Naive thymus-derived CD4-positive, alpha-beta T cell (primary cell): ENCODE measurements at regions of chr21 and their contacts with region 1.

Region 1: GRCh38 chr21:15552914-15553494 is 176.8 kb upstream of the USP25 start:
- DNase-seq: peak in 6 of 9 donors; percentile 13 to 62 (median 48)
- ATAC-seq: peak; percentile 64
- H3K4me3 ChIP-seq: no peak overlapping the region
- H3K4me3 Mint-ChIP-seq: peak overlapping the region in 5 of 10 donors; percentile 25 to 56 (median 33)
- H3K27ac ChIP-seq: no peak overlapping the region
- H3K27ac Mint-ChIP-seq: peak overlapping the region in 5 of 9 donors; percentile 4 to 70 (median 16)
- H3K4me1 ChIP-seq: peaks cover 0 to 9% of the 10 kb centered on the region in 2 donors
- H3K4me1 Mint-ChIP-seq: peaks cover 4 to 23% (median 18%) of the 10 kb centered on the region in 7 donors
- H3K27me3 ChIP-seq: no peaks in the 10 kb centered on the region
- H3K27me3 Mint-ChIP-seq: peaks cover 0 to 4% (median 0%) of the 10 kb centered on the region in 5 donors

Region 2: DNA sequence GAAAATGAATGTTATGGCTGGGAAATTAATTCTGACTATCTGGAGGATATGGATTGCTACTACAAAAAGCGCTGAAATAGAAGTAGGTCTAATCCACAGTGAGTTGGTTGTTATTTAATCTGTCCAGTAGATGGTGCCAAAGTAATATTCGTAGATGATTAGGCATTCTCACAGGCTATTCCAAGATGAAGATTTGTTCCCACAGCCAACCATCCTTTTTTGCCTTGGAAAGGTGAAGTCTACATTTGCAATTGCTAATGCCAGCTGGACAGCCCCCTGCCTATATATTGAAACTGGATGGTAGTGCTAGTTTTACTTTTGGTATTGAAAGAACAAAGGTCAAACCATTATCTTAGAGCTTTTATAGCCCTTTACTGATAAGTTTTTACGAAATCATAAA is 1293.3 kb before region 1 on chr21:
- CTCF ChIA-PET with region 1: no interaction called
- POLR2A ChIA-PET with region 1: no interaction called
- intact Hi-C with region 1: loop called in 1 of 2 experiments (anchors 1 kb)
- DNase-seq: peak in 5 of 9 donors; percentile 13 to 28 (median 23)
- ATAC-seq: peak; percentile 59
- H3K4me3 ChIP-seq: no peak overlapping the region
- H3K4me3 Mint-ChIP-seq: no peak overlapping the region
- H3K27ac ChIP-seq: no peak overlapping the region
- H3K27ac Mint-ChIP-seq: no peak overlapping the region
- H3K4me1 ChIP-seq: no peaks in the 10 kb centered on the region
- H3K4me1 Mint-ChIP-seq: no peaks in the 10 kb centered on the region
- H3K27me3 ChIP-seq: no peaks in the 10 kb centered on the region
- H3K27me3 Mint-ChIP-seq: peaks cover 2 to 19% (median 12%) of the 10 kb centered on the region in 5 donors

Region 3: GRCh38 chr21:14773777-14774345 is 779.1 kb before region 1 on chr21:
- CTCF ChIA-PET with region 1: no interaction called
- POLR2A ChIA-PET with region 1: no interaction called
- intact Hi-C with region 1: loop called in 1 of 2 experiments (anchors 5 kb)
- DNase-seq: peak in 8 of 9 donors; percentile 8 to 57 (median 37)
- ATAC-seq: peak; percentile 74
- H3K4me3 ChIP-seq: no peak overlapping the region
- H3K4me3 Mint-ChIP-seq: no peak overlapping the region
- H3K27ac ChIP-seq: no peak overlapping the region
- H3K27ac Mint-ChIP-seq: no peak overlapping the region
- H3K4me1 ChIP-seq: no peaks in the 10 kb centered on the region
- H3K4me1 Mint-ChIP-seq: peaks cover 0 to 6% (median 0%) of the 10 kb centered on the region in 7 donors
- H3K27me3 ChIP-seq: peaks cover 0 to 3% of the 10 kb centered on the region in 2 donors
- H3K27me3 Mint-ChIP-seq: peaks cover 0 to 11% (median 0%) of the 10 kb centered on the region in 5 donors

Region 4: DNA sequence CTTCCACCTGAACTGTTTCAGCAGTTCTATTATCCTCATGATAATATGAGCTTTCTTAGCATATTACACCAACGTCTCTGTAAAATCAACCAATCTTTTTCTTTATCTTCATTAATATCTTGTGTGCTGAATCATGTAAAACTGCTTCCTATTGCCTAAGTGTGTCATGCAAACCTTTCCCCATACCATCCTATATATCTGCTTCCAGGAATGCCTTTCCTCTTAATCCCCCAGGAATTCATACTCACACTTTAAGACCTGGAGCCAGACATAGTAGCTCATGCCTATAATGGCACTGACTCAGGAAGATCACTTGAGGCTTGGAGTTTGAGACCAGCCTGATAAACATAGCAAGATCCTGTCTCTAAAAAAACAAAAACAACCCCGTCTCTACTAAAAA is 672.1 kb before region 1 on chr21:
- CTCF ChIA-PET with region 1: interaction called, 5 read pairs
- POLR2A ChIA-PET with region 1: no interaction called
- intact Hi-C with region 1: loop called in 1 of 2 experiments (anchors 5 kb)
- DNase-seq: no peak
- ATAC-seq: no peak
- H3K4me3 ChIP-seq: no peak overlapping the region
- H3K4me3 Mint-ChIP-seq: no peak overlapping the region
- H3K27ac ChIP-seq: no peak overlapping the region
- H3K27ac Mint-ChIP-seq: no peak overlapping the region
- H3K4me1 ChIP-seq: no peaks in the 10 kb centered on the region
- H3K4me1 Mint-ChIP-seq: peaks cover 0 to 4% (median 0%) of the 10 kb centered on the region in 7 donors
- H3K27me3 ChIP-seq: no peaks in the 10 kb centered on the region
- H3K27me3 Mint-ChIP-seq: peaks cover 0 to 4% (median 0%) of the 10 kb centered on the region in 5 donors

Region 5: GRCh38 chr21:15514073-15514946 is 38.7 kb before region 1 on chr21:
- CTCF ChIA-PET with region 1: interaction called, 9 read pairs
- POLR2A ChIA-PET with region 1: no interaction called
- intact Hi-C with region 1: loop called in 1 of 2 experiments (anchors 1 kb)
- DNase-seq: peak in 8 of 9 donors; percentile 34 to 87 (median 82)
- ATAC-seq: peak; percentile 99
- H3K4me3 ChIP-seq: peak overlapping the region; percentile 23
- H3K4me3 Mint-ChIP-seq: peak overlapping the region; percentile 59 to 76 (median 69)
- H3K27ac ChIP-seq: peak overlapping the region; percentile 46
- H3K27ac Mint-ChIP-seq: peak overlapping the region; percentile 75 to 94 (median 87)
- H3K4me1 ChIP-seq: peaks cover 12 to 32% of the 10 kb centered on the region in 2 donors
- H3K4me1 Mint-ChIP-seq: peaks cover 16 to 54% (median 31%) of the 10 kb centered on the region in 7 donors
- H3K27me3 ChIP-seq: no peaks in the 10 kb centered on the region
- H3K27me3 Mint-ChIP-seq: no peaks in the 10 kb centered on the region

Region 6: DNA sequence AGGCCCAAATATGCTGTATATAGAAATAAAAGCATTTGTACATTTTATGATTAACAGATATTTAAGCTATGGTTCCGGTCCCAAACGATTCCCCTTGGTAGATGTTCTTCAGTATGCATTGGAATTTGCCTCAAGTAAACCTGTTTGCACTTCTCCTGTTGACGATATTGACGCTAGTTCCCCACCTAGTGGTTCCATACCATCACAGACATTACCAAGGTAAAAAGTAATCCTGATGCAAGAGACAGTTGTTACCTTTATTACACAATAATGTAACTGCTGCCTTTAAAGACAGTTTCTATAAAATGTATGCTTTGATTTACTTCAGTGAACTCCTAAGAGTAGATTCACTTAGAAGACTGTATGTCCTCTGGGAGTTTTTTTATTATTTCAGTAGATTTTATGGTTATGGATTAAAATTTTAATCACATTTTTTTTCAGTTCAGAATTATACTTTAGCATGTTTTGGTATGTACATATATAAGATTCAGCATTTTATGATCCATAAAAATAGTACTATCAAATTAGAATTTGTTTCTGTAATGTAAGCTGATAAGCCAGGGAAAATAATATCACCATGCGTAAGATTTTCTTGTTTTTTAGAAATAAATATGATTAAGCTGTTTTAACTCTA is 273.3 kb after region 1 on chr21:
- CTCF ChIA-PET with region 1: no interaction called
- POLR2A ChIA-PET with region 1: no interaction called
- intact Hi-C with region 1: loop called in 1 of 2 experiments (anchors 1 kb)
- DNase-seq: peak in 7 of 9 donors; percentile 6 to 51 (median 31)
- ATAC-seq: peak; percentile 68
- H3K4me3 ChIP-seq: no peak overlapping the region
- H3K4me3 Mint-ChIP-seq: peak overlapping the region in 2 of 10 donors; percentile 1 to 6
- H3K27ac ChIP-seq: no peak overlapping the region
- H3K27ac Mint-ChIP-seq: peak overlapping the region in 4 of 9 donors; percentile 1 to 56 (median 36)
- H3K4me1 ChIP-seq: peaks cover 18 to 21% of the 10 kb centered on the region in 2 donors
- H3K4me1 Mint-ChIP-seq: peaks cover 18 to 54% (median 47%) of the 10 kb centered on the region in 7 donors
- H3K27me3 ChIP-seq: no peaks in the 10 kb centered on the region
- H3K27me3 Mint-ChIP-seq: no peaks in the 10 kb centered on the region